BJ (cell line): ENCODE measurements at regions of chr12 and their contacts with region 1.

Region 1: GRCh38 chr12:57803319-57803893 is 15.1 kb downstream of the AVIL start:
- DNase-seq: no peak
- H3K4me3 ChIP-seq: no peak overlapping the region
- H3K27me3 ChIP-seq: no peaks in the 10 kb centered on the region
- CTCF ChIP-seq: peak; percentile 84

Region 2: DNA sequence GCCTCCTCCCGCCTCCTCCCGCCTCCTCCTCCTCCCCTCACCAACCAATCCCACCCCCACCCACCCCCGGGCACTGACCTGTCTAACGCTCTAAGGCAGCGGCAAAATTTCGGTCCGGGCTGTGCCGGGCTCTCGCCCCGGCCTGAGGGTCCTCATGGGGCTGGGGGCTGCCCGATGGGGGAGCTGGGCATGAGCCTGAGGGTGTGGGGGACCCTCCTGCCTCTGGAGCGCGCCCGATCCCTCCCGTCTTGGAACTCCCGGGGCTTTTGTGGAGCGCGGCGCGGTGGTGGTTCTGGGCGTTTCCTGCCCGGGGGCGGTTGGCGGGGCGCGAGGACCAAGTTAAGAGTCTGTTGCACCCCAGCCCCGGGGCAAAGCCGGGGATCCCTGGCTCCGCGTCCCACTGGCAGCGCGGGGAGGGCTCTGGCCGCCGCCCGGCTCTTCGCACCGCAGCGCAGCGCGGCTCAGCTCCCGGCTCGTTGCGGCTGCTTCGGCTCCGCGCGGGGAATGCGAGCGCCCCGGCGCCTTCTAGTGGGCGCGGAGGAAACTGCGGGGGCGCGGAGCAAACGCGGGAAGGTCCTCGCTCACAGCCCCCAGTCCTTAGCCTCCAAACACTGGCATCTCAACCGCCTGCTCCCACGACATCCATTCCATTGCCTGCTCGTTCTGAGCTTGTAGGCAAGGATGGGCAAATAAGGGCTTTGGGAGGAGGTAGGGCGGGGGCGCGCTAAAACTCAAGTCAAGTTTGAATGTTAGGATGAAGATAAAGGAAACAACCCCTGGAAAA is 170.5 kb before region 1 on chr12 and contains the start of gene B4GALNT1:
- CTCF ChIA-PET with region 1: no interaction called
- POLR2A ChIA-PET with region 1: no interaction called
- DNase-seq: no peak
- H3K4me3 ChIP-seq: peak within 1 kb of the TSS; percentile 49
- H3K27me3 ChIP-seq: peaks cover 16% of the 10 kb centered on the region
- CTCF ChIP-seq: peak; percentile 87
- polyA plus RNA-seq, gene B4GALNT1: 1.2 and 2.7 TPM in 2 replicates

Region 3: GRCh38 chr12:57782608-57783465 is 20.6 kb before region 1 on chr12 and contains the start of gene TSFM:
- CTCF ChIA-PET with region 1: interaction called, 12 read pairs
- POLR2A ChIA-PET with region 1: no interaction called
- DNase-seq: peak; percentile 36
- H3K4me3 ChIP-seq: peak within 1 kb of the TSS; percentile 76
- H3K27me3 ChIP-seq: no peaks in the 10 kb centered on the region
- CTCF ChIP-seq: peak; percentile 92
- polyA plus RNA-seq, gene TSFM: 14.5 and 15.1 TPM in 2 replicates

Region 4: GRCh38 chr12:57815177-57816000 is 12.0 kb after region 1 on chr12:
- CTCF ChIA-PET with region 1: interaction called, 56 read pairs
- POLR2A ChIA-PET with region 1: no interaction called
- DNase-seq: no peak
- H3K4me3 ChIP-seq: no peak overlapping the region
- H3K27me3 ChIP-seq: no peaks in the 10 kb centered on the region
- CTCF ChIP-seq: no peak

Region 5: GRCh38 chr12:57836442-57837375 is 33.3 kb after region 1 on chr12:
- CTCF ChIA-PET with region 1: interaction called, 13 read pairs
- POLR2A ChIA-PET with region 1: no interaction called
- DNase-seq: no peak
- H3K4me3 ChIP-seq: peak overlapping the region; percentile 12
- H3K27me3 ChIP-seq: no peaks in the 10 kb centered on the region
- CTCF ChIP-seq: no peak

Region 6: GRCh38 chr12:57861967-57862366 is 58.6 kb after region 1 on chr12:
- CTCF ChIA-PET with region 1: no interaction called
- POLR2A ChIA-PET with region 1: no interaction called
- DNase-seq: no peak
- H3K4me3 ChIP-seq: no peak overlapping the region
- H3K27me3 ChIP-seq: no peaks in the 10 kb centered on the region
- CTCF ChIP-seq: no peak

Region 7: DNA sequence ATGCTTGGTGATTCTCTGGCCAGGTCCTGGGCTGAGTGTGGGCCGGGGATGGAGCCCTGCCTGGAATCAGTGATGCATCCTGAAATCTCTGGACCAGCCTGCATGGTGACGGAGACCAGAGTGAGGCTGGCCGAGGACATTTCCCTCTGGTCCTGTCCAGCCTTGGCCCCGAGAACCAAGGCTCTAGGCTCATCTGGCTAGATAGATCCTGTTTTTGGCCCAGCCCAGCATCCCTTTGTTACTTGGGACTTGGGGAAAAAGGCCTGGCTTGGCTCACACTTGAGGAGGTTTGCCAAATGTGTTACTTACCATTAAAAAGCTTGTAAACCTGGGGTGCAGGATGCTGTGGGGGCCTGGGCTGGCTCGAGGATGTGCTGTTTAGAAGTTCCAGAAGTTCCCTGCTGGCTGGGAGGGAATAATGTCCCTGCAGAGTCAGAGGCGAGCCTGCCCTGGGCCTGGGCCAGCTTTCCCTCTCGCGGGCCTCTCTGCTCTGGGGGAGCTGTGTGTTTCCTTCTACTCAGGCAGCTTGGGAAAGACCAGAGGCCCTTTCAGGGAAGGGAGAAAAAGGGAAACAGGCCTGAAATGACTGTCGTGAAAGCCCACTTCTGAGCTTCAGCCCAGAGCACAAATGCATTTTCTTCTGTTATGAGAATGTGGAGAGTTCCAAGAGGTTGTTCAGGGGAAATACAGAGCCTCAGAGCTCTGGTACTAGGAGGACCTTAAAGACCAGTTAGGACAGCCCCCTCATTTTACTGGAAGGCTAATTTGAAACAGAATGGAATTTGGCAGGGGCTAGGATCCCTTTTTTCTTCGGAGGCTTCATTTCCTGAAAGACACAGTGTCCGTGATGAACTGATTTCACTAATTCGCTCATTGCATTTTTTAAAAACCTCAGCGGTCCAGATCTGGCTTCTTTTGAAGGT is 90.3 kb after region 1 on chr12:
- CTCF ChIA-PET with region 1: interaction called, 13 read pairs
- POLR2A ChIA-PET with region 1: no interaction called
- DNase-seq: peak; percentile 91
- H3K4me3 ChIP-seq: no peak overlapping the region
- H3K27me3 ChIP-seq: no peaks in the 10 kb centered on the region
- CTCF ChIP-seq: peak; percentile 37

Region 8: GRCh38 chr12:57899010-57899662 is 95.7 kb after region 1 on chr12:
- CTCF ChIA-PET with region 1: interaction called, 67 read pairs
- POLR2A ChIA-PET with region 1: no interaction called
- DNase-seq: no peak
- H3K4me3 ChIP-seq: no peak overlapping the region
- H3K27me3 ChIP-seq: no peaks in the 10 kb centered on the region
- CTCF ChIP-seq: no peak

Region 9: GRCh38 chr12:57904848-57905811 is 101.7 kb after region 1 on chr12:
- CTCF ChIA-PET with region 1: interaction called, 67 read pairs
- POLR2A ChIA-PET with region 1: no interaction called
- DNase-seq: no peak
- H3K4me3 ChIP-seq: no peak overlapping the region
- H3K27me3 ChIP-seq: no peaks in the 10 kb centered on the region
- CTCF ChIP-seq: peak; percentile 100